Posterior cingulate gyrus (tissue), 11 donors: ENCODE measurements at regions of chr2 and their contacts with region 1.

Region 1: GRCh38 chr2:230902180-230902899 is 22.7 kb downstream of the GPR55 start:
- DNase-seq: peak in 7 of 10 donors; percentile 9 to 94 (median 54)

Region 2: DNA sequence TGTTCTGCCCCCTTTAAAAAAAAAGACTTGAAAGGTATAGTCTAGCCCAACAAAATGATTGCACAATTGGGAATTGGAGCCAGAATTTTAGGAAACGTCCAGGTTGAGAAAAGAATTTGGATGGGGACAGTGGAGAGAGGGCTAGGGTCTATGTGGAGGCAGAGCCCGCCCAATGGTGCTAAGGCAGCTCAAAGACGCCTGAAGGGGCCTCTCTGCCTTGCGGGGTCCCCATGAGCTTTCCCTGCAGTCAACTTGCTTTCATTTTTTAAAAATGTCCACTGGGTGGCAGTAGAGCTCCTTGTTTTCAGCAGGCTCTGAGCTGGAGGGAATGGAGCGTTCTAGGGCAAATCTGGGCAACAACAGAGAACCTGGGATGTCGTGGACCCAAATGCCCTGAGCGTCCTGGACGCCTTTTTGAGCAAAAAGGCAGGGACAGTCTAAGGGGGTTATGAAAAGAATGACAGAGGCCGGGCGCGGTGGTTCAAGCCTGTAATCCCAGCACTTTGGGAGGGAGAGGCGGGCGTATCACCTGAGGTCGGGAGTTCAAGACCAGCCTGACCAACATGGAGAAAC is 77.8 kb before region 1 on chr2:
- intact Hi-C with region 1: loop called (anchors 5 kb)
- DNase-seq: peak in 7 of 10 donors; percentile 30 to 89 (median 43)

Region 3: DNA sequence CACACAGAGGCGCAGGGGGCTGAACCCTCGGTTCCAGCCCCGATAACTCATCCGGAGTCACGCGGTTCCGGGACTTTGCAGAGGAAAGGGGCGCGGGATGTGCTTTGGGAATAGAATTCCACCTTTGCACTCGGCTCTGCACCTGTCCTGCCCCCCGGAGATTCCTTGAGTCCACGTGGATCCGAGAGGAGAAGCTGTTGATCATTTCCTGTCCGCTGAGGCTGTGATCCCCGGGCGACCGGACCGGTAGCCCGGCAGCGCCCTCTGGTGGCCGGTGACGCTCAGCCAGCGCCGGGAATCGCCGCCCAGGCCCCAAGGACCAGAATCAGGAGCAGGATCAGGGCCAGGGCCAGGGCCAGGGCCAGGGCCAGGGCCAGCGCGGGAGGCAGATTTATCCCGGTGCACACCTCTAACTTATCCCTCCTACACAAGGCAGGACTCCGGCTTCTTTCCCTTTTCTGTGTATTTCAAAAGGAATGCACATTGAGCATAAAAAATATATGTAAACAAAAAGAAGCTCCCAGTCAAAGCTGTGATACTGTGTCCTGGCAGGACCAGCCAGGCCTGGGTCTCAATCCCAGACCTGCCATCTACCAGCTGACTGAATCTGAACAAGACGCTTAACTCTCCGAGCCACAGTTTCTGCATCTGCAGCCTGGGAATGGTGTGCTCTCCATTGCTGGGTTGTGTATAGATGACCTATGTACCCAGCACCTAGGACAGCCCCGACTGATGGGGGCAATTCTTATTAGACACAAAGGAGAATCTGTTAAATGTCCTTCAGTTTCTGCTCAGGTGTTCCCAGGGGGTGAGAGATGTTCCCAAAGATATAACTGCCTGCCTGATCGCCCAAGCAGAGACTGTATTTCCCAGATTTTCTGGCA is 85.0 kb after region 1 on chr2:
- intact Hi-C with region 1: loop called (anchors 1 kb)
- DNase-seq: peak; percentile 64 to 97 (median 86)

Region 4: GRCh38 chr2:231056453-231057424 is 154.4 kb after region 1 on chr2 and contains the start of gene PSMD1:
- intact Hi-C with region 1: loop called (anchors 2 kb)
- DNase-seq: peak; percentile 85 to 98 (median 91)

Region 5: DNA sequence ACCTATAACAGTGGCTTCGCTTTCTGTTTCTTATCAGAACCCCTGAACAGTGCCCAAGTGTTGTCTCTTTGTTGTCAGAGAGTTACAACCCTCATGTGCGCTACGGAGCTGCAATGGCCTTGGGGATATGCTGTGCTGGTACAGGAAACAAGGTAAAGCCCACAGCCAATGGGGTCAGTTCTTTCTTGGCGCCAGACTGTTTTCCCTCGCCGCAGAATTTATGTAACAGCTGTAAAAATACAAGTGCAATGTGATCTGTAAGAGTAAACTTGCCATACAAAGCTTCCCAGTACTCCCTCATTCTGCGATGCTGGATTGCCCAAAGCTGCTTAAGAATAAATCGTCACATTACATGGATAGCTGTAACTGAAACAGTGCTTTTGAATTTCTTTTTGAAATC is 236.4 kb after region 1 on chr2:
- intact Hi-C with region 1: no loop called
- DNase-seq: no peak